AG04449 (cell line): ENCODE measurements at regions of chr2 and their contacts with region 1.

Region 1: GRCh38 chr2:207473049-207473930 is 56.5 kb upstream of the CREB1 start:
- DNase-seq: peak; percentile 45
- H3K4me3 ChIP-seq: no peak overlapping the region
- CTCF ChIP-seq: peak; percentile 84

Region 2: DNA sequence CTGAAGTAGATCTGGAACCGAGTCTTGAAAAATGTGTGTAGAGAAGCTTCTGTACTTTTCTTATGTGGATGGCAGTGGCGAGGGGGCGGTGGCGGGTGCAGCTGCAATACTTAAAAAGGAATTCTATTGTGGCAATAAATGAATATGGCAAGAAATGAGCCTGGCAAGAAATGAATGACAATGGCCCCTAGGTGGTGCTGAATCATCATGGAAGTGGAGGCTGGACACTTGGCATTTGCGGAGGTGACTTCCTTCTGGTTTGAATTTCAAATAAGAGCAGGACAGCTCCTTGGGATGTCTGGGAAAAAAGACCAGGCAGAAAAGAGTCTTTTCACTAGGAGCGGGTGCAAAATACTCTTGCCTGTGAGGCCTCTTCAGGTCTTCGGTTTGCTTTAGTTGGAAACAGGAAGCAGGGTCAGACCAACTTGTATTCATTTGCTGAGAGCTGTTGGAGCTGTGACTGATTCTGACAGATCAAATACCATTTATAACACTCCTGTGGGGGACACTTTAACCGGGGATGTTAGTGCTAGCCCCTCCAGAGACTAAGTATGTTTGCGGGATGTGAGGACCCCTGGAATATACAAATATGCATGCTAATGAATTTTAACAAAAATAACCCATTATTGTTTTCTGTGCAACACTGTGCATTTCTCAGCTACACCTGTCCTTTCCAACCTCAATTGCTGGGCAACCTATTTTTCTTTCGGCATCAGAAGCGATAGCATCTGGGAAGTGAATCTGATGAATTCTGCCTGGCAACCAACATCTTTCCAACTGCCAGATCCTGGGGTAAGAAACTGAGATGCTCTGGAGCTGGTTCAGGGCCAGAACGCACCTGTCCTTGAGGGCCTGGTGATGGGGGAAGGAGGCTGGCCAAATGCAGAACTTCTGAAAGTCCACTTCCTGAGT is 672.5 kb before region 1 on chr2:
- CTCF ChIA-PET with region 1: interaction called, 68 read pairs
- POLR2A ChIA-PET with region 1: no interaction called
- DNase-seq: peak; percentile 38
- H3K4me3 ChIP-seq: no peak overlapping the region
- CTCF ChIP-seq: peak; percentile 68

Region 3: DNA sequence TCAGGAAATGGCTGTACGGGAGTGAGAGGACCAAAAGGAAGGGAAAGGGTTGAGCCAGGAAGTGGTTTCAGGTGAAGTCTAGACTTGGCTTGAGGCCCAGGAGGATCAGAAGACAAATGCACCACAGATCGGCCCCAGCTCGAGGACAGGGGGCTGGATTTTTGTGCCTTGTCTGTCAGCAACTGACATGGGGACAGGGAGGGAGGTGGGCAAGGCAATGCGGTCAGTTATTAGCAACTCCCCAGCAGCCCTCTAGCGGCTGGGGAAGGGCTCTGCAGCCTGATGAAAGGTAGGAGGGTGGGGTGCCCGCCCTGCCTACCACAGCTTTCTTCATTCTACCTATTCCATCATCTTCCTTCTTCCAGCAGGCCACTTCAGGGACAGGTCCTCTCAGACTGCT is 484.0 kb before region 1 on chr2:
- CTCF ChIA-PET with region 1: interaction called, 163 read pairs
- POLR2A ChIA-PET with region 1: no interaction called
- DNase-seq: no peak
- H3K4me3 ChIP-seq: no peak overlapping the region
- CTCF ChIP-seq: peak; percentile 68

Region 4: DNA sequence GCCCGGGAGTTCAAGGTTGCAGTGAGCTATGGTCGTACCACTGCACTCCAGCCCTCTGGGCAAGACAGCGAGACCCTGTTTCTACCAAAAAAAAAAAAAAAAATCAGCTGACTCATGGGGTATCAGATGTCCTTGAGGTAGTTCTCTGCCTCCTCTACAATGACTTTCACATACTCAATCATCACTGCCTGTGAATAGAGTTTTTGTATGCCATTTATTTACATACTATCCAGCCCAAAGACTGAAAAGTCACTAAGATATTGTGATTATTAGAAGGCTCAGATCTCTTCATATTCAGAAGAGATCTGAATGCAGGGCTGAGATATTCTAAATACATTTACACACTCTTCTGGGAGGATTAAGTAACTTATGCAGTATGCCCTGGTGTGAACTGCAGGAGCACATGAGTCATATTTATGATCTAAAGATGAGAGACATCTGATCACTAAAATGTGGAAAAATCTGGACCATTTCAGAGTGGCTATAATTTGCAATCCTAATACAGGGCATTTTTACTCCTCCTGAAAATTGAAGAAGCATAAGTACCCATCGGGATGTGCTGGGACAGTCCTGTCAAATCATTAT is 346.5 kb before region 1 on chr2:
- CTCF ChIA-PET with region 1: interaction called, 11 read pairs
- POLR2A ChIA-PET with region 1: no interaction called
- DNase-seq: no peak
- H3K4me3 ChIP-seq: no peak overlapping the region
- CTCF ChIP-seq: no peak

Region 5: DNA sequence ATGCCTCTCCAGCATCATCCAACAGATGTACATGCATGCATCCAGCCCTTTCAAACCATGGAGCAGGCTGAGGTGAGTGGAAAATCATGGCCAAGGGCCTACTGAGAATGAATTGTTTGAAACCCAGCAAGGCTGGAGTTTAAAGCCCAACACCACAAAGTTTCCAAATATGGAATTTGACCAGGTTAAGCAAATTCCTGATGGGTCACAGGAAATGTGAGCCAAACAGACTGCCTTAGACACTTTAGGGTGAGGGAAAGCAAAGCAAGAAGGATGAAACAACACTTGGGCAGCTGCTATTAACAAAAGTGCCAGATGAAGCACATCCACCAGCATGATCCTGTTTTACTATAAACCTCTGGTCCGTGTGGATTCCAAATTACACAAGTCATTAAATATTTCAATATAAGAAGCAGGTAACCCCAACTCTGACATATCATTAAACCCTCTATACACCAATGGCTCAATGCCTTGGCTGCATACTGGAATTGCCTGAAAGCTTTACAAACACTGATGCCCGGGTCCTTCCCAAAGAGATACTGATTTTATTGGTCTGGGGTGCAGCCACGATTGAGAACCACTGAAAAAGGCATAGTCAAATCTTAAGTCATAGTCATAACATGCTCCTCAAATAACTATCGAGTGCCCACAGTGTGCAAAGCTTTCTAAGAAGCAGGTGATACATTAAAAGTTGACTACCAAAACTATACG is 316.7 kb before region 1 on chr2:
- CTCF ChIA-PET with region 1: interaction called, 13 read pairs
- POLR2A ChIA-PET with region 1: no interaction called
- DNase-seq: no peak
- H3K4me3 ChIP-seq: no peak overlapping the region
- CTCF ChIP-seq: no peak

Region 6: GRCh38 chr2:207238831-207239701 is 234.2 kb before region 1 on chr2:
- CTCF ChIA-PET with region 1: interaction called, 10 read pairs
- POLR2A ChIA-PET with region 1: interaction called, 3 read pairs
- DNase-seq: peak; percentile 100
- H3K4me3 ChIP-seq: no peak overlapping the region
- CTCF ChIP-seq: no peak